AG04450 (cell line): ENCODE measurements at regions of chr4 and their contacts with region 1.

Region 1: DNA sequence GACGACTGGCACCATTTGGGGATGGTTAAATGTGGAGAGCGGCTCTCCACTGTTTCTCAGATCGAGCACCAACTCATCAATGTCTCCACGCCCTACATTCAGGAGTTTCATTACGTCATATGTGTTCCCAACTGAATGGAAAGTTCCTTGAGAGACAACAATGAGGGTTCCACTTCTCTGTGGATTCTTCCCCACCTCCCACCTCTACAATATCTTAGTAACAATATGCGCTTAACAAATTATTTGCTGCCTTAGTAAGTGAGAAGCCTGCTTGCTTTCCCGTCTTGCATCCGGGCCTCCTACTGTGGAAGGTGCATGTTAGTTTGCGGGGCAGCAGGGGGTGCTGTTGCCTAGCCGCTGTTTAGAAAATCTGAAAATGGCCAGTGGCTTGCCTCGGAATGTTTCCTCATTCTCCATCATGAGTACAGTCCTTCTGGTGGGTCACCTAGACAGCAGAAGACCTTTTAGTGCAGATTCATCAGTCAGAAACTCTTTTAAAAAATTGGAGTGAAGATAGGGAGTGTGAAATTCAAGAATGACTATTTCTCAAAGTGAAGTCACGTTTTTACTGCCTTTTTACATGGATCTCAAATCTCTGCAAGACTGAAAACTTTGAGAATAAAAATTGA is 55.7 kb downstream of the PHOX2B start:
- DNase-seq: peak; percentile 18
- H3K4me3 ChIP-seq: no peak overlapping the region
- H3K27ac ChIP-seq: no peak overlapping the region
- H3K27me3 ChIP-seq: peaks cover 9% of the 10 kb centered on the region
- CTCF ChIP-seq: peak; percentile 97

Region 2: GRCh38 chr4:41281038-41281634 is 411.7 kb before region 1 on chr4:
- CTCF ChIA-PET with region 1: interaction called, 29 read pairs
- POLR2A ChIA-PET with region 1: no interaction called
- DNase-seq: no peak
- H3K4me3 ChIP-seq: no peak overlapping the region
- H3K27ac ChIP-seq: no peak overlapping the region
- H3K27me3 ChIP-seq: no peaks in the 10 kb centered on the region
- CTCF ChIP-seq: peak; percentile 91

Region 3: DNA sequence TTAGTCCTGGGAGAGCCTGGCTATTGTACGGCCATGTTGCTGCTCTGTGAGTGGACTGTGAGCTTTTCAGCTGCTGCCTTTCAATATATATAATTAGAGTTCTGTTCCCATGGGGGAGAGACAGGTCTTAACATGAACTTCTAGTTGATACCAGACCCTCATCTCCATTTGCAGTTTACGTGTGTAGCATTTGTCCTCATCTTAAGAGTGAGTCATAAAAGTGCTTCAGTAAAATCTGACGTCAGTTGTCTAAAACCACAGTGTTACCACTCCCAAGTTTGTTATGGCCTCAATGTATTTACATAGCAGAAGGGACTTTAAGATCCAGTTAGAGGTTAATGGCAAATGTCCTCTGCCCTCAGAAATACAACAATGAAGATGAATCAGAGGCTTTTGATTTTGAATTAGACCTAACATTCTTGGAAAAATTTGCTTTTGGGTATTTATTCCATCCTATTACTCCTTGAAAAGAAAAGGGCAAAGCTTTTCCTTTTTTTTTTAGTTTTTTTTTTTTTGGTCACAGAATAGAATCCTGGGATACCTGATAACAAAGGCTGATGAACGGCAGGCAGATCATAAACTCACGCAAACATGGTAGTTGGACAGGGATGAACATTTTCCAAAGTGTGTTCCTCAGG is 17.1 kb after region 1 on chr4:
- CTCF ChIA-PET with region 1: interaction called, 11 read pairs
- POLR2A ChIA-PET with region 1: no interaction called
- DNase-seq: peak; percentile 49
- H3K4me3 ChIP-seq: no peak overlapping the region
- H3K27ac ChIP-seq: no peak overlapping the region
- H3K27me3 ChIP-seq: no peaks in the 10 kb centered on the region
- CTCF ChIP-seq: no peak

Region 4: GRCh38 chr4:41814565-41814964 is 121.7 kb after region 1 on chr4:
- CTCF ChIA-PET with region 1: interaction called, 95 read pairs
- POLR2A ChIA-PET with region 1: no interaction called
- DNase-seq: peak; percentile 4
- H3K4me3 ChIP-seq: no peak overlapping the region
- H3K27ac ChIP-seq: no peak overlapping the region
- H3K27me3 ChIP-seq: peaks cover 5% of the 10 kb centered on the region
- CTCF ChIP-seq: peak; percentile 72

Region 5: DNA sequence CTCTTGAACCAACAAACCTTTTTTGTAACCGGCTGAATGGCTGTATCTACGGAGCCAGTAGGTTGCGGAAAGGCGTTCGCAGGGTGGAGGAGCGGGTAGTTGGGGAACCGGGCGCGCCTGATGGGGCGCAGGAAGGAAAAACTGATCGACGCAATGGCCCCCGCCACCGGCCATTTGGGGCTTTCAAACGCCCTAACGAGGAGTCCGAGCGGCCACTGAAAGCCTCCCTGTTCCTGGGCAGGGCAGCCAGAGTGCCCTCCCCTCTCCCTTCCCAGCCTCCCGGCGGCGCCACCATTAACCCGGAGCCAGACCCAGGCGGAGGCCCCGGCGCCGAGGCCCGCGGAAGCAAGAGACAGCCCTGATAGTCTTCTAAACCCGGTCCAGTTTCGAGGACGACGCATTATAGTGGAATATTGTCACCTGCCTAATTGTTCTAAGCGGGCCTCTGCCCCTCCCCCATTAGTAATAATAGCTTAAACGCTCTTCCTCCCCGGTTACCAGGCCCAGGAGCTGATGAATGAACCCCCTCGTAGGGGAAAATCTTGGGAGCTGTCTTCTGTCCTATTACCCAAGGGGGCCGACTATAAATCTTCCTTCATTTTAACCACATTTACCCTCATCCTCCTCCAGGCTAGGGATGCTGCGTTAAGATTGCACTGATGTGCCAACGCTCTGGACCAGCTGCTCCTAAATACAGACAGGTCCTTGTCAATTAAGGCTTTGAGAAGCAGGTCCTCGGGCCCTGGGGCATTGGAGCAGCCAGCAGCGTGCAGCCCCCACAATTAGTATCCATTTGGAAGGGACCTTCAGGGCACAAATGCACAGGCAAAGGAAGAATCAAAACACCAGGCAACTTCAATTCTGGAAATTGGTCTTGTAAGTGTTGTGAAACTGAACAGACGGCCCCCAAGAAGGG is 180.8 kb after region 1 on chr4:
- CTCF ChIA-PET with region 1: interaction called, 12 read pairs
- POLR2A ChIA-PET with region 1: no interaction called
- DNase-seq: no peak
- H3K4me3 ChIP-seq: no peak overlapping the region
- H3K27ac ChIP-seq: no peak overlapping the region
- H3K27me3 ChIP-seq: peaks cover 64% of the 10 kb centered on the region
- CTCF ChIP-seq: no peak

Region 6: DNA sequence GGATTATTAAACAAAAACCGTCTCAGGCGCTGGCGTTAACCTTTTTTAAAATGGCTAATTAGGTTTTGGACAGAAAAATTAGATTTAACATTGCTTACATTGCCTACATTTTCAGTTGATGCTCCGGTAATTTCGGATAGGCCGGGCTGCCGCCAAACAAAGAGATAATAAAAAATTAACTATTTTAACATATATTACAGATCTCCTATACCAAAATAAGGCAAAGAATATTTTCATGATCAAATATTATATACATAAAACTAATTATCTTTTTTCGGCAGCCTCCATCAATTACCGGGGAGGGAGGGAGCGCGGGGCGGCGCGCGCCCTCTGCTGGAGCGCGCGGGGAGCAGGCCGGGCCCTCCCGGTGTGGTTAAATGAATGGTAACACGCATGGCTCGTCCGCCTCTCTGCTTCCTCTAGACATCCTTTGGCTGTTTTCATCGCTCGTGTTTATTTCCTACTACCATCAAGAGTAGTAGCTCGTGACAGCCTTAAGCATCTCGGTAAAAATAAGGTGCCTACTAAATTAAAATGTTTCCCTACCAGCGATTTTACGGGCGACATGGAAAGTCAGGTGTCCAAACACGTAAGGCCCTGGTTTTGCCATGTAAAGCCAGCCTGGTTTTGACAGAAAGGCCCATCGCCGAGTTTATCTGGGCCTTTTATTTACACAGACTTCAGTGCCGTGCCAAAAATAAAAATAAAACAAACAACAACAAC is 190.0 kb after region 1 on chr4:
- CTCF ChIA-PET with region 1: interaction called, 154 read pairs
- POLR2A ChIA-PET with region 1: no interaction called
- DNase-seq: no peak
- H3K4me3 ChIP-seq: no peak overlapping the region
- H3K27ac ChIP-seq: no peak overlapping the region
- H3K27me3 ChIP-seq: peaks cover 77% of the 10 kb centered on the region
- CTCF ChIP-seq: peak; percentile 97